PC-3 (cell line): ENCODE measurements at regions of chr13 and their contacts with region 1.

Region 1: DNA sequence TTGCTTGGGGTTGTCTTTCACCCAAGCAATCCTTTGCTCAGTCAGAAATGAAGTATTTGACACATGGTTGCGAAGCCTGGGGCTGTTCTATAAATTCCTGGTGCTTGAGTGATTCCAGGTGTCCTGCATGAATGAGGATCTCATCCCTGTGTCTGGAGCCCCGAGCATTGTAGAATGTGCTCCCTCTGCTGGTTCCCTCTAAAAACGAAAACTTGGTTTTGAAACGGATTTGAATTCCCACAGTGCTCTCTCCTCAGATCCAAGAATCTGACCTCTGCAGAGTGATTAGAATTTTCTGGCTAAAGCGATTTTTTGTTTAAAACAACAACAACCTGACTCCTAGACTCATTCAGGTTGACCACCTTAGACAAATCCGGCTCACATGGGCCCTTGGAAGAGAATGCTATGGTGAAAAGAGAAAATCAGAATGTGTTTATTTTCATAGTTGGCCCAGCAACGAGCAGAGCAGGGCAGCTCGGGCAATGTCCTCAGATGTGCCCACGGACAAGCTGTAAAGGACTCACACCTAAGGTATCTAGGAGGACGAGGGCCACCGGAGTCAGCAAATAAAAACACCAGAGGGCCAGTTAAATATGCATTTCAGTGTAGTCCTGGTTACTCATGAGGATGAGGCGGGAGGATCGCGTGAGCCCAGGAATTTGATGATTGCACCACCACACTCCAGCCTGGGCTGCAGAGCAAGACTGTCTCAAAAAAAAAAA is 8.7 kb upstream of the ATP12A start:
- DNase-seq: peak; percentile 86
- ATAC-seq: peak; percentile 77
- H3K4me3 ChIP-seq: peak overlapping the region; percentile 46
- H3K27ac ChIP-seq: no peak overlapping the region
- H3K4me1 ChIP-seq: peaks cover 29% of the 10 kb centered on the region
- H3K27me3 ChIP-seq: no peaks in the 10 kb centered on the region
- CTCF ChIP-seq: peak; percentile 75

Region 2: DNA sequence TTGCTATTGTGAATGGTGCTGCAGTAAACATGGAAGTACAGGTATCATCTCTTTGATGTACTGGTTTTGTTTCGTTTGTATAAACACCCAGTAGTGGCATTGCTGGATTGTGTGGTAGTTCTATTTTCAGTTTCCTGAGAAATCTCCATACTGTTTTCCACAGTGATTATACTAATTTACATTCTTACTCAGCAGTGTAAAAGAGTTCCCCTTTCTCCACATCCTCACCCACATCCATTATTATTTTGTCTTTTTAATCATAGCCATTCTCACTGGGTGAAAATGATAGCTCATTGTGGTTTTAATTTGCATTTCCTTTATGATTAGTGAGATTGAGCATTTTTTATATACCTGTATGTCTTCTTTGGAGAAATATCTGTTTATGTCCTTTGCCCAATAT is 96.7 kb before region 1 on chr13:
- CTCF ChIA-PET with region 1: no interaction called
- POLR2A ChIA-PET with region 1: no interaction called
- intact Hi-C with region 1: loop called (anchors 2 kb)
- DNase-seq: no peak
- ATAC-seq: no peak
- H3K4me3 ChIP-seq: no peak overlapping the region
- H3K27ac ChIP-seq: no peak overlapping the region
- H3K4me1 ChIP-seq: no peaks in the 10 kb centered on the region
- H3K27me3 ChIP-seq: no peaks in the 10 kb centered on the region
- CTCF ChIP-seq: no peak

Region 3: DNA sequence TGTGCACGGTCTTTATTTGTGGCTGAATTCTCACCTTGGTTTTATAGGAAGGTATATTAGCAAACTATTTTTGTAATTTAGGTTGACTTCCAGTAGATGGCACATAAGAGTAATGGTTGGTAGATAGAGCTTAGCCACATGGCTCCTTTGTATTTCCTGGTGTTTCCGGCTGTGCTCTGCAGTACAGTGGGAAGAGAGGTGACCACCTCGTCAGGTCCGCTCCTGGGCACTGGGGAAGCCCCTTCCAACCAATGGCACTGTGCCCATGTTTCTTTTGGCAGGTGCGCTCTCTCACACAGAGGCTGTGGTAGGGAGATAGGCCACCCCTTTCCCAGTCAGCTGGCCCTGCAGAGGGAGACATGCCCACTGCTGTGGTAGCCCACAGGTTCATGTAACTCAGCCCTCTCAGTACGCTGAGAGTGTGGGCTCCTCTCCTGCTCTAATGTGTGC is 65.6 kb before region 1 on chr13:
- CTCF ChIA-PET with region 1: interaction called, 4 read pairs
- POLR2A ChIA-PET with region 1: no interaction called
- intact Hi-C with region 1: loop called (anchors 1 kb)
- DNase-seq: peak; percentile 64
- ATAC-seq: peak; percentile 75
- H3K4me3 ChIP-seq: no peak overlapping the region
- H3K27ac ChIP-seq: no peak overlapping the region
- H3K4me1 ChIP-seq: no peaks in the 10 kb centered on the region
- H3K27me3 ChIP-seq: peaks cover 13% of the 10 kb centered on the region
- CTCF ChIP-seq: peak; percentile 55

Region 4: DNA sequence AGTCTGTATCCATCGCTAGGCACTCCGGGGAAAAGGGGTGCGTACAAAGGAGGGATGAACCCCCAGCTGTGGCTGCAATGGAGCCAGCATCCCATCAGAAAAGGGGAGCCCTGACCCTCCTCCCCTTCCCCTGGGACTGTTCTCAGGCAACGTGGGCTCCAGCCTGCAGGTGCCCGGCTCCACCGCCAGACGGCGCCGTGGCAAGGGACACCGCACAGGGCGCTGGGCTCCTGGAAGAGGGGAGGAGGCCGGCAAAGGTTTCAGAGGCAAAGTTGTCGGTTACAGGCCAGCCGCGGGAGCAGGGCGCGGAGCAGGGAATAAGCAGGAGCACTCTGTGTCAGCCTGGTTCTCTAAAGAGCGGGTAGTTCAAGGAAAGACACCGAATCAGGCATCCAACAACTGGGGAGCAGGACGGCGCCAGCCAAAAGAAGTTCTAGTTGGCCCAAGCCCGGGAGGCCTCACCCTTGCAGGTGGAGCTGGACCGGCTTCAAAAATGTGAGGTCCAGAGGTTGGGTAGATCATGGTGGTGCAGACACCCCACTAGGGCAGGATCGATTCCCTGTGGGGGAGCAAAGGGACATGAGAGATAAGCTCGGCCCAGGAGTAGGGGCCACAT is 44.3 kb before region 1 on chr13:
- CTCF ChIA-PET with region 1: no interaction called
- POLR2A ChIA-PET with region 1: no interaction called
- intact Hi-C with region 1: loop called (anchors 5 kb)
- DNase-seq: peak; percentile 54
- ATAC-seq: peak; percentile 51; the same call in 1 of the 2 replicates
- H3K4me3 ChIP-seq: no peak overlapping the region
- H3K27ac ChIP-seq: no peak overlapping the region
- H3K4me1 ChIP-seq: no peaks in the 10 kb centered on the region
- H3K27me3 ChIP-seq: no peaks in the 10 kb centered on the region
- CTCF ChIP-seq: peak; percentile 81

Region 5: GRCh38 chr13:24644036-24644435 is 27.5 kb before region 1 on chr13:
- CTCF ChIA-PET with region 1: no interaction called
- POLR2A ChIA-PET with region 1: no interaction called
- intact Hi-C with region 1: no loop called
- DNase-seq: peak; percentile 27
- ATAC-seq: no peak
- H3K4me3 ChIP-seq: no peak overlapping the region
- H3K27ac ChIP-seq: no peak overlapping the region
- H3K4me1 ChIP-seq: no peaks in the 10 kb centered on the region
- H3K27me3 ChIP-seq: no peaks in the 10 kb centered on the region
- CTCF ChIP-seq: no peak

Region 6: DNA sequence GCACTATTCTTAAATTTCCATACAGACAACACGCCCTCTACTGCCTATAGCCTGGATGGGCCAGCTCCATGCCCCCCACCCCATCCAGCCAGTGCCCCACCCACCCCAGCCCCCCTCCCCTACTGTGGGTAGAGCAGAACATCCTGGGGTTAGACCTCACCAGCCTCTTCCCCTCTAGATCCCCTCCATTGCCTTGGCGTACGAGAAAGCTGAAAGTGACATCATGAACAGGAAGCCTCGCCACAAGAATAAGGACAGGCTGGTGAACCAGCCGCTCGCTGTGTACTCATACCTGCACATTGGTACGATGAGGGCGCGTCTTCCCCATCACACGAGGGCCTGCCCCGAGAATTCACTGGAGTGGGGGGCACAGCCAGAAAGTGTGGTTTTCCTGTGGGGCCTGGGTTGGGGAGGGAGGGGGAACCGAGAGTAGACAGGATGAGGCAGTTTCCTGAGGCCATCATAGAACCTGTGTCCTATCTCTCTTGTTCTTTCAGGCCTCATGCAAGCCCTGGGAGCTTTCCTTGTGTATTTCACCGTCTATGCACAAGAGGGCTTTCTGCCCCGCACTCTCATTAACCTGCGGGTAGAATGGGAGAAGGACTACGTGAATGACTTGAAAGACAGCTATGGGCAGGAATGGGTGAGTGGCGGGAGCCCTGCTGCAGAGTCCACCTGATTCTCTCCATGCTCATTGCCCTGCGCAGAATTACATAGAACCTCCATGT is 37.8 kb after region 1 on chr13:
- CTCF ChIA-PET with region 1: interaction called, 10 read pairs
- POLR2A ChIA-PET with region 1: no interaction called
- intact Hi-C with region 1: no loop called
- DNase-seq: no peak
- ATAC-seq: no peak
- H3K4me3 ChIP-seq: no peak overlapping the region
- H3K27ac ChIP-seq: no peak overlapping the region
- H3K4me1 ChIP-seq: no peaks in the 10 kb centered on the region
- H3K27me3 ChIP-seq: peaks cover 26% of the 10 kb centered on the region
- CTCF ChIP-seq: no peak